ENCODE measurements at regions of chr4 and their contacts with region 1.

Region 1: DNA sequence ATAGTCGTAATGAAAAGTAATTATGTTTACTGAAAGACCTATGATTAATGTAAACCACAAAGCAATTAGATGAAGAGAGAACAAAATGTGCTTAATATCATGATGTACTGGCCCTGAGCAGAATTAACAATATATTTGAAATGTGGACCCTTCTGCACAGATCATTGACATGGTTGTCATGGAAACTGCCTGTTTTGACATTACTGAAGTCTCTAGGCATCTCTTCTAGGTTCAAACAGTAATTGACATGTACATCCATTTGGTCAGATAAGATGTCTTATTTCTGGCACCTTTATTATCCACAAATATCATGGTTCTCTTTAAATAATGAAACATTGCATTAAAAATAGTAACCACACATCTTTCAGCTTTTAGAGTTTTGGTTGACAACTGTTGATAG is 251.7 kb upstream of the GNPDA2 start:
- DNase-seq: no peak
- H3K4me3 ChIP-seq: no peak overlapping the region
- H3K27ac ChIP-seq: no peak overlapping the region
- H3K4me1 ChIP-seq: no peaks in the 10 kb centered on the region
- H3K27me3 ChIP-seq: no peaks in the 10 kb centered on the region
- CTCF ChIP-seq: no peak
- POLR2A ChIP-seq: no peak

Region 2: GRCh38 chr4:44777115-44777514 is 200.9 kb before region 1 on chr4:
- intact Hi-C with region 1: no loop called
- DNase-seq: no peak
- H3K4me3 ChIP-seq: no peak overlapping the region
- H3K27ac ChIP-seq: no peak overlapping the region
- H3K4me1 ChIP-seq: no peaks in the 10 kb centered on the region
- H3K27me3 ChIP-seq: no peaks in the 10 kb centered on the region
- CTCF ChIP-seq: no peak
- POLR2A ChIP-seq: no peak

Region 3: GRCh38 chr4:44916411-44916810 is 61.6 kb before region 1 on chr4:
- intact Hi-C with region 1: loop called (anchors 2 kb)
- DNase-seq: no peak
- H3K4me3 ChIP-seq: peak overlapping the region; percentile 0 to 13
- H3K27ac ChIP-seq: peak overlapping the region; percentile 0
- H3K4me1 ChIP-seq: no peaks in the 10 kb centered on the region
- H3K27me3 ChIP-seq: no peaks in the 10 kb centered on the region
- CTCF ChIP-seq: no peak
- POLR2A ChIP-seq: no peak